Sigmoid colon (tissue), 7 donors: ENCODE measurements at regions of chr19 and their contacts with region 1.

Region 1: GRCh38 chr19:8832132-8833021 is at the starts of genes MBD3L1 and ZNF558:
- DNase-seq: peak; percentile 99
- H3K4me3 ChIP-seq: peak within 1 kb of the TSS; percentile 77 to 92 (median 82)
- H3K27ac ChIP-seq: peak within 1 kb of the TSS; percentile 90 to 98 (median 94)
- H3K4me1 ChIP-seq: peaks cover 0 to 20% (median 11%) of the 10 kb centered on the region in 4 donors
- H3K27me3 ChIP-seq: no peaks in the 10 kb centered on the region
- CTCF ChIP-seq: peak in 2 of 4 experiments; percentile 21 to 29
- EP300 ChIP-seq: no peak
- POLR2A ChIP-seq: peak; percentile 65 to 85
- total RNA-seq, gene MBD3L1: not detected
- total RNA-seq, gene ZNF558: 23.2 to 55.1 (median 36.6) TPM

Region 2: DNA sequence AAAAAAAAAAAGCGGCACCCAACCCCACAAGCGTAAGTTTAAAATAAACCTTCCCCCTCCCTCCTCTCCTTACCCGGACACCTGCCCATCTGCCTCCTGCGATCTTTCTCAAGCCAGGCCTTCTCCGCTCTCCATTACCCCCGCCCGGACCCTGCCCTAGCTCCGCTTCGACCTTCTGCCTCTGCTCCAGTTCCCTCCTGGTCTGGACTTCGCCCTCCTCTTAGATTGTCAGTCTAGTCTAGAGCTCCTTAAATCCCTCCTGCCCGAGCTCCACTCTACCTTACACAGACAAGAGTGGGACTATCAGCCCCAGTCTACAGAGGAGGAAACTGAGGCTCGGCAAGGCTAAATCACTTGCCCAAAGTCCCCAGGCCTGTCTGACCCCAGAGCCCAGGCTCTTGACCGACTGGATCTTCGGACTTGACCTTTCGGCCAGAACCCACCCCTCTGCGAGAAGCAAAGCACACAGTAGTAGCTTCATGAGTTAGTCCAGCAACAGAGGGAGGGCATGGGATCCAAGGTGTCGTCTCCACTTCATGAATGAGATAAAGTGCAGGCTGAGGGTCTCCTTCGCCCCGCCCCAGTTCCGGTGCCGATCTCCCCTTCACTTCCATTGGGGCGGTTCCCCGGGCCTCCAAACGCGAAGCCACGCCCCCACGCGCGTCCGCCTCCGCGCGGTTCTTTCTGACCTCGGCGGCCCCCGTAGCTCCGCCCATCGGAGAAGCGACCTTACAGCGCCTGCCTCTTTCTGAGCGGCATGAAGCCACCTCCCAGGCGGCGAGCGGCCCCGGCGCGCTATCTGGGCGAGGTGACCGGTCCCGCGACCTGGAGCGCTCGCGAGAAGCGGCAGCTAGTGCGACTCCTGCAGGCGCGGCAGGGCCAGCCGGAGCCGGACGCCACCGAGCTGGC is 912.5 kb before region 1 on chr19 and contains the start of gene SNAPC2:
- intact Hi-C with region 1: loop called (anchors 10 kb)
- DNase-seq: peak; percentile 98
- H3K4me3 ChIP-seq: peak within 1 kb of the TSS; percentile 70 to 87 (median 74)
- H3K27ac ChIP-seq: peak within 1 kb of the TSS; percentile 93 to 98 (median 96)
- H3K4me1 ChIP-seq: peaks cover 0 to 83% (median 81%) of the 10 kb centered on the region in 4 donors
- H3K27me3 ChIP-seq: peaks cover 38 to 47% (median 44%) of the 10 kb centered on the region in 3 donors
- CTCF ChIP-seq: no peak
- EP300 ChIP-seq: peak in 1 of 4 donors; percentile 64
- POLR2A ChIP-seq: peak; percentile 22 to 59
- total RNA-seq, gene SNAPC2: 20.3 to 31.2 (median 27.8) TPM

Region 3: GRCh38 chr19:8321060-8321985 is 511.1 kb before region 1 on chr19 and contains the starts of genes NDUFA7 and RPS28:
- intact Hi-C with region 1: loop called (anchors 5 kb)
- DNase-seq: peak; percentile 99
- H3K4me3 ChIP-seq: peak within 1 kb of the TSS; percentile 75 to 93 (median 80)
- H3K27ac ChIP-seq: peak within 1 kb of the TSS; percentile 88 to 92 (median 92)
- H3K4me1 ChIP-seq: peaks cover 0 to 37% (median 29%) of the 10 kb centered on the region in 4 donors
- H3K27me3 ChIP-seq: no peaks in the 10 kb centered on the region
- CTCF ChIP-seq: peak in 1 of 4 experiments; percentile 10
- EP300 ChIP-seq: peak in 1 of 4 donors; percentile 64
- POLR2A ChIP-seq: peak; percentile 90 to 93
- total RNA-seq, gene NDUFA7: 21.0 to 35.5 (median 27.5) TPM
- total RNA-seq, gene RPS28: 244 to 601 (median 414) TPM

Region 4: GRCh38 chr19:8580710-8581281 is 251.6 kb before region 1 on chr19:
- intact Hi-C with region 1: loop called (anchors 2 kb)
- DNase-seq: peak; percentile 88
- H3K4me3 ChIP-seq: no peak overlapping the region
- H3K27ac ChIP-seq: no peak overlapping the region
- H3K4me1 ChIP-seq: peaks cover 0 to 9% (median 3%) of the 10 kb centered on the region in 4 donors
- H3K27me3 ChIP-seq: peaks cover 4 to 18% (median 17%) of the 10 kb centered on the region in 3 donors
- CTCF ChIP-seq: peak; percentile 95 to 98 (median 96)
- EP300 ChIP-seq: no peak
- POLR2A ChIP-seq: no peak

Region 5: GRCh38 chr19:9054765-9055164 is 222.4 kb after region 1 on chr19:
- intact Hi-C with region 1: no loop called
- DNase-seq: no peak
- H3K4me3 ChIP-seq: no peak overlapping the region
- H3K27ac ChIP-seq: no peak overlapping the region
- H3K4me1 ChIP-seq: no peaks in the 10 kb centered on the region
- H3K27me3 ChIP-seq: no peaks in the 10 kb centered on the region
- CTCF ChIP-seq: no peak
- EP300 ChIP-seq: no peak
- POLR2A ChIP-seq: no peak

Region 6: GRCh38 chr19:9075064-9075949 is 242.9 kb after region 1 on chr19:
- intact Hi-C with region 1: loop called (anchors 5 kb)
- DNase-seq: peak; percentile 90
- H3K4me3 ChIP-seq: no peak overlapping the region
- H3K27ac ChIP-seq: peak overlapping the region; percentile 73 to 89 (median 77)
- H3K4me1 ChIP-seq: peaks cover 0 to 27% (median 23%) of the 10 kb centered on the region in 4 donors
- H3K27me3 ChIP-seq: no peaks in the 10 kb centered on the region
- CTCF ChIP-seq: no peak
- EP300 ChIP-seq: peak in 1 of 4 donors; percentile 33
- POLR2A ChIP-seq: no peak

Region 7: GRCh38 chr19:9309139-9309973 is 477.0 kb after region 1 on chr19 and contains the start of gene ZNF699:
- intact Hi-C with region 1: loop called (anchors 10 kb)
- DNase-seq: peak; percentile 99
- H3K4me3 ChIP-seq: peak within 1 kb of the TSS; percentile 68 to 94 (median 84)
- H3K27ac ChIP-seq: peak within 1 kb of the TSS; percentile 91 to 98 (median 96)
- H3K4me1 ChIP-seq: peaks cover 0 to 21% (median 13%) of the 10 kb centered on the region in 4 donors
- H3K27me3 ChIP-seq: no peaks in the 10 kb centered on the region
- CTCF ChIP-seq: no peak
- EP300 ChIP-seq: peak in 1 of 4 donors; percentile 4
- POLR2A ChIP-seq: peak; percentile 33 to 63
- total RNA-seq, gene ZNF699: 3.1 to 23.7 (median 11.9) TPM

Region 8: DNA sequence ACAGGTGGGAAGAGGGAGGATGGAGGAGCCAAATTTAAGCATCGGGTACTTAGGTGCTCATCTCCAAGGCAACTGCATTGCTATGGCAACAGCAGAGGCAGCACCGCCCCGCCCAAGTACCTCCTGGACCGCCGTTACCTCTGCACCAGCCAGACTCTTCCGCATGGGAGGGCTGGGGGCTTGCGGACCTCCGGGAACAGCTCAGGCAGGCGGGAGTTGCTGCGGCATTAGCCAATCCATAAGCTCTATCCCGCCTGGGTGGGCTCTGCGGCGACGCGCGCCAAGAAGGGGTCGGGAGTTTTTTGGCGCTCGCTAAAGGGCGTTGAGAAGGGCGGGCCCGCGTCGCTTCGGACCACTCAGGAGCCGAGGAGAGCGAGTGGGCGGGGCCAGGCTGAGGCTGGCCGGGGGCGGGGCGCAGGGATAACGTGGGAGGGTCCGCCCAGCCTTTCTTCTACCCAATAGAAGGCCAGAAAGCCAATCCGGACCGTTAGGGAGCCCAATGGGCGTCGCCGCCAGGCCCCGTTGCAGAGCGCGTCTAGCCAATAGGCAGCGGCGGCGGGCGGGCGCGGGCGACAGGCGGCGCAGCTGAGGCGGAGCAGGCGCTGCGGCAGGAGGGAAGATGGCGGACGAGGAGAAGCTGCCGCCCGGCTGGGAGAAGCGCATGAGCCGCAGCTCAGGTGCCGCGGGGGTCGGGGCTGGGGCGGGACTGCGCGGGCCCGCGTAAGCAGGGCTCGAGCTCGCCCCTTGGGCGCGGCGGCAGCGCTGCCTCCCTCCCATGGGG is 1002.5 kb after region 1 on chr19 and contains the start of gene PIN1:
- intact Hi-C with region 1: loop called (anchors 5 kb)
- DNase-seq: peak; percentile 99
- H3K4me3 ChIP-seq: peak within 1 kb of the TSS; percentile 90 to 100 (median 97)
- H3K27ac ChIP-seq: peak within 1 kb of the TSS; percentile 79 to 88 (median 84)
- H3K4me1 ChIP-seq: peaks cover 0 to 33% (median 13%) of the 10 kb centered on the region in 4 donors
- H3K27me3 ChIP-seq: no peaks in the 10 kb centered on the region
- CTCF ChIP-seq: peak in 2 of 4 experiments; percentile 34 to 61
- EP300 ChIP-seq: no peak
- POLR2A ChIP-seq: no peak
- total RNA-seq, gene PIN1: 77.5 to 149 (median 142) TPM